ENCODE measurements at regions of chrX and their contacts with region 1.

Region 1: DNA sequence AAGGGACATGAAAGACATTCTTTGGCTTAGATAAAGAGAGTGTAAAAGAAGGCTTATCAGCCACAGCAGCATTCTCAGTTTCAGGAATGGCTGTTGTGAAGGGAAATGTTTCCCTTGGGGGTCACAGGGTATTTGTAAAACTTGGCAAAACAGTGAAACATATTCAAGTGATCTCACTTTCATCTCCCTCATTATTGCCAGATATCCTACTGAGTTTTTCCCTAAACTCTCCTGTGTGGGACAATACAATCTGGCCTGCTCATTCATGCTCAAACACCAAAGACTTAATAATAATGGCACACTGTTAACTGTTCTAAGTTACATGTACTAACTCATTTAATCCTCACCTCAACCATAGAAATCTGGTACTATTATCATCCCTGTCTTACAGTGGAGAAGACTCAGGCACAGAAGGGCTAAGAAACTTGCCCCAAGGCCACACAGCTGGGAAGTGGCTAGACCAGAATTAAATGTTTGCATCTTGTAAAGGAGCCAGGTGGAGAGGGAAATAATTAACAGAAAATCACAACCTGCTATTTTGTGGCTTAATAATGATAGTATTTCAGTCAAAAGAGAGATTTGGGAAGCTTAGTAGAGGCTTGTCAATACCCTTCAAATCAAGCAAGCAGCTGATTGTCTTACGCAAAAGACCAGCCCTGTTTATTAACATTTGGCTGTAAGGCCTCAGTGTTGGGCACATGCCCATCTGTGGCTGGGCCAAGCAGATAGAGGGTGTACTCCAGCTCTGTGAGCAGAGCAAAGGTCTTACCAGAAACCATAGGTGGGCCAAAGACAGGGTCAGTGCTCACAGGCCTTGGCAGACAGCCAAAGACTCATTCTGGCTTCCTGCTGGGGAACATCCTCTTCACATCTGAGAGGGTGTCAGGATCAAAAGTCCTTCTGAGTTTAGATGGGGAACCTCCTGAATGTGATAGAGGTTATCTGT is 17.3 kb downstream of the SMPX start:
- DNase-seq: peak; percentile 13 to 43
- ATAC-seq: peak in 7 of 8 donors; percentile 68 to 91 (median 86)
- H3K4me3 ChIP-seq: no peak overlapping the region
- H3K27ac ChIP-seq: peak overlapping the region in 4 of 10 donors; percentile 7 to 43 (median 24)
- H3K4me1 ChIP-seq: peaks cover 0 to 44% (median 5%) of the 10 kb centered on the region in 9 donors
- H3K27me3 ChIP-seq: peaks cover 0 to 31% (median 0%) of the 10 kb centered on the region in 7 donors
- CTCF ChIP-seq: no peak

Region 2: GRCh38 chrX:21756785-21757529 is 16.4 kb after region 1 on chrX:
- intact Hi-C with region 1: loop called in 1 of 10 experiments (anchors 2 kb)
- DNase-seq: no peak
- ATAC-seq: peak; percentile 64 to 90 (median 84)
- H3K4me3 ChIP-seq: peak overlapping the region; percentile 14 to 57 (median 46)
- H3K27ac ChIP-seq: peak overlapping the region; percentile 66 to 89 (median 84)
- H3K4me1 ChIP-seq: no peaks in the 10 kb centered on the region
- H3K27me3 ChIP-seq: peaks cover 0 to 21% (median 0%) of the 10 kb centered on the region in 7 donors
- CTCF ChIP-seq: no peak